MCF 10A (cell line): ENCODE measurements at regions of chr9 and their contacts with region 1.

Region 1: DNA sequence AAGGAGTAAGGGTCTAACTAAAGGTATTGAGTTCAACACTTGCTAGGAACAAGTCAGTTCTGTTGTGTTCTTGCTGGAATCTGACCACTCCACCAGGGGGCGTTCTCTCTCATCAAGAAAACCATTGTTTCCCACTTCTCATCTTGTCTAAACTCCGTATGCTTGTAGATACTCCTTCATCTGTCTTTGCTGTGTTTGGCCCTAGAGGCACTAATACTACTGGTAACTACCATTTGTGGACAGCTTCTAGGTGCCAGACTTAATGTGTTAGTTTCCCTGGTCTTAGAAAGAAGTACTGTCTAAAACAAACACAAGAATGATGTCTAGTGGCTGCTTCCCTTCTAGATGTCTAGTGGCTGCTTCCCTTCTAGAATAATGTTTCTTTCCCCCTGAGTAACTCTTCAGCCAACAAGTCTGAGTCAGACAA is 18.7 kb upstream of the PTPDC1 start:
- DNase-seq: peak; percentile 91
- H3K4me3 Mint-ChIP-seq: no peak overlapping the region
- H3K27ac Mint-ChIP-seq: peak overlapping the region; percentile 71
- H3K4me1 Mint-ChIP-seq: peaks cover 10% of the 10 kb centered on the region
- H3K27me3 Mint-ChIP-seq: no peaks in the 10 kb centered on the region
- CTCF ChIP-seq: peak; percentile 71

Region 2: DNA sequence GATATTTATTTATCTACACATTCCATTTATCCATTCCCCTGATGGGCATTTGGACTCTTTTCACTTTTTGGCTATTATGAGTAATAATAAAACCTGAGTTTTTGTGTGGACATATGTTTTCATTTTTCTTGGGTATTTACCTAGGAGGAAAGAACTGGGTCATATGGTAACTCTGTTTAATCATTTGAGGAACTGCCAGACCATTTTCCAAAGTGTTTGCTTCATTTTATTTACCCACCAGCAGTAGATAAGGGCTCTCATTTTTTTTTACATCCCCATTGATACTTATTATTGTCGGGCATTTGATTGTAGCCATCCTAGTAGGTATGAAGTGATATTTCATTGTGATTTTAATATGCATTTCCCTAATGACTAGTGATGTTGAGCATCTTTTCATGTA is 11.0 kb after region 1 on chr9:
- CTCF ChIA-PET with region 1: interaction called, 20 read pairs
- POLR2A ChIA-PET with region 1: no interaction called
- intact Hi-C with region 1: no loop called
- DNase-seq: no peak
- H3K4me3 Mint-ChIP-seq: no peak overlapping the region
- H3K27ac Mint-ChIP-seq: no peak overlapping the region
- H3K4me1 Mint-ChIP-seq: no peaks in the 10 kb centered on the region
- H3K27me3 Mint-ChIP-seq: no peaks in the 10 kb centered on the region
- CTCF ChIP-seq: no peak

Region 3: GRCh38 chr9:94097788-94098414 is 32.4 kb after region 1 on chr9:
- CTCF ChIA-PET with region 1: interaction called, 7 read pairs
- POLR2A ChIA-PET with region 1: interaction called, 10 read pairs
- intact Hi-C with region 1: no loop called
- DNase-seq: peak; percentile 96
- H3K4me3 Mint-ChIP-seq: peak overlapping the region; percentile 35
- H3K27ac Mint-ChIP-seq: peak overlapping the region; percentile 97
- H3K4me1 Mint-ChIP-seq: peaks cover 26% of the 10 kb centered on the region
- H3K27me3 Mint-ChIP-seq: no peaks in the 10 kb centered on the region
- CTCF ChIP-seq: no peak

Region 4: GRCh38 chr9:94139672-94140417 is 74.3 kb after region 1 on chr9:
- CTCF ChIA-PET with region 1: interaction called, 11 read pairs
- POLR2A ChIA-PET with region 1: interaction called, 19 read pairs
- intact Hi-C with region 1: loop called (anchors 1 kb)
- DNase-seq: peak; percentile 97
- H3K4me3 Mint-ChIP-seq: peak overlapping the region; percentile 62
- H3K27ac Mint-ChIP-seq: peak overlapping the region; percentile 93
- H3K4me1 Mint-ChIP-seq: peaks cover 69% of the 10 kb centered on the region
- H3K27me3 Mint-ChIP-seq: no peaks in the 10 kb centered on the region
- CTCF ChIP-seq: no peak

Region 5: DNA sequence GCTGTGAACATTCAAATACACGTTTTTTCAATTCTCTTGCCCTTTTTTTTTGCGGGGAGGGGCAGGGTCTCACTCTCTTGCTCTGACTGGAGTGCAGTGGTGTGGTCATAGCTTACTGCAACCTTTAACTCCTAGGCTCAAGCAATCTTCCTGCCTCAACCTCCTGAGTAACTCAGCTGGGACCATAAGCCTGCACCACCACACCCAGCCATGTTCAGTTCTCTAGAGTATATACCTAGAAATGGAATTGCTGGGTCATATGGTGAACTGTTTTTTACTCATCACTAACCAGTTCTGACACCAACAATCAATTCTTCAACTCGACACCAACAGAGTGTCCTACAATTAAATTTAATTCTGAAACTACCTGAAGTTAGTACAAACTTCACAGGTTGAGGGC is 108.1 kb after region 1 on chr9:
- CTCF ChIA-PET with region 1: interaction called, 47 read pairs
- POLR2A ChIA-PET with region 1: interaction called, 21 read pairs
- intact Hi-C with region 1: loop called (anchors 1 kb)
- DNase-seq: no peak
- H3K4me3 Mint-ChIP-seq: peak overlapping the region; percentile 83
- H3K27ac Mint-ChIP-seq: no peak overlapping the region
- H3K4me1 Mint-ChIP-seq: peaks cover 44% of the 10 kb centered on the region
- H3K27me3 Mint-ChIP-seq: no peaks in the 10 kb centered on the region
- CTCF ChIP-seq: no peak

Region 6: DNA sequence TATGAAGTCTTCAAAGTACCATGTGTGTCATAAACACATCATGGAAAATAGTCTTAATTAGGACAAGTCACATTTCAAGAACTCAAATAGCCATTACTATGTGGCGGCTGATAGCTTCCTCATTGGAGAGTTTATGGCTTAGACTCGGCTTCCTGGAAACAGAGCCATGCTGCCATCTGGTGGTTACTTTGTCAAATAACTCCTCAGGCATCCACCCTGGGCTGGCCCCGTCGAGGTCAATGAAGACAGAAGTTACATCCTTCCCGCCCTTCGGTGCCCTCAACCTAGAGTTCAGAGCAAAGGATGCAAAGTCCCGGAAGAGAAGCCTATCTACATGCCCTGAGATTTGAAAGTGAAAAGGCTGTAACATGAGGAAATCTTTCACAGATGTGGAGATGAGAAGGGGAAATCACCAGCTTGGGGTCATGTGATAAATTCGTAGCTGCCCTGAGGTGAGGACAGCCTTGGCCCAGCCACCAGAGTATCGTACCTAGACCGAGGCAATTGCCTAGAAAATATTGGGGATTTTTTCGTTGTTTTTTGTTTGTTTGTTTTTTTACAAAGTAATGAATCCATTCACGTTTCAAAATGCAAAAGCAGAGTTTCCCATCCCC is 148.1 kb after region 1 on chr9:
- CTCF ChIA-PET with region 1: interaction called, 96 read pairs
- POLR2A ChIA-PET with region 1: interaction called, 9 read pairs
- intact Hi-C with region 1: loop called (anchors 1 kb)
- DNase-seq: peak; percentile 85
- H3K4me3 Mint-ChIP-seq: no peak overlapping the region
- H3K27ac Mint-ChIP-seq: no peak overlapping the region
- H3K4me1 Mint-ChIP-seq: peaks cover 11% of the 10 kb centered on the region
- H3K27me3 Mint-ChIP-seq: no peaks in the 10 kb centered on the region
- CTCF ChIP-seq: peak; percentile 72